Panc1 (cell line): ENCODE measurements at regions of chr9 and their contacts with region 1.

Region 1: GRCh38 chr9:112333639-112334431 is 416 bp upstream of the PTBP3 start:
- DNase-seq: no peak
- ATAC-seq: peak; percentile 89
- H3K4me3 ChIP-seq: peak overlapping the region; percentile 65 to 83
- H3K27ac ChIP-seq: peak overlapping the region; percentile 87
- H3K4me1 ChIP-seq: peaks cover under 1% of the 10 kb centered on the region; the same call in 1 of the 2 replicates
- H3K27me3 ChIP-seq: no peaks in the 10 kb centered on the region
- CTCF ChIP-seq: peak; percentile 83

Region 2: GRCh38 chr9:112155732-112156131 is 178.1 kb before region 1 on chr9:
- CTCF ChIA-PET with region 1: no interaction called
- POLR2A ChIA-PET with region 1: interaction called, 10 read pairs
- in situ Hi-C with region 1: no loop called
- intact Hi-C with region 1: no loop called
- DNase-seq: no peak
- ATAC-seq: no peak
- H3K4me3 ChIP-seq: no peak overlapping the region
- H3K27ac ChIP-seq: no peak overlapping the region
- H3K4me1 ChIP-seq: no peaks in the 10 kb centered on the region
- H3K27me3 ChIP-seq: no peaks in the 10 kb centered on the region
- CTCF ChIP-seq: no peak

Region 3: GRCh38 chr9:112286926-112287325 is 46.9 kb before region 1 on chr9:
- CTCF ChIA-PET with region 1: no interaction called
- POLR2A ChIA-PET with region 1: interaction called, 10 read pairs
- in situ Hi-C with region 1: no loop called
- intact Hi-C with region 1: no loop called
- DNase-seq: no peak
- ATAC-seq: no peak
- H3K4me3 ChIP-seq: no peak overlapping the region
- H3K27ac ChIP-seq: no peak overlapping the region
- H3K4me1 ChIP-seq: no peaks in the 10 kb centered on the region
- H3K27me3 ChIP-seq: no peaks in the 10 kb centered on the region
- CTCF ChIP-seq: no peak